ENCODE measurements at regions of chr2 and their contacts with region 1.

Region 1: GRCh38 chr2:192162392-192163042 is 32.2 kb downstream of the TMEFF2 start:
- DNase-seq: no peak
- ATAC-seq: peak; percentile 50
- H3K4me3 Mint-ChIP-seq: peak overlapping the region; percentile 17
- H3K27ac Mint-ChIP-seq: no peak overlapping the region
- H3K4me1 Mint-ChIP-seq: peaks cover 12% of the 10 kb centered on the region
- H3K27me3 Mint-ChIP-seq: peaks cover 4% of the 10 kb centered on the region
- CTCF ChIP-seq: peak; percentile 53

Region 2: DNA sequence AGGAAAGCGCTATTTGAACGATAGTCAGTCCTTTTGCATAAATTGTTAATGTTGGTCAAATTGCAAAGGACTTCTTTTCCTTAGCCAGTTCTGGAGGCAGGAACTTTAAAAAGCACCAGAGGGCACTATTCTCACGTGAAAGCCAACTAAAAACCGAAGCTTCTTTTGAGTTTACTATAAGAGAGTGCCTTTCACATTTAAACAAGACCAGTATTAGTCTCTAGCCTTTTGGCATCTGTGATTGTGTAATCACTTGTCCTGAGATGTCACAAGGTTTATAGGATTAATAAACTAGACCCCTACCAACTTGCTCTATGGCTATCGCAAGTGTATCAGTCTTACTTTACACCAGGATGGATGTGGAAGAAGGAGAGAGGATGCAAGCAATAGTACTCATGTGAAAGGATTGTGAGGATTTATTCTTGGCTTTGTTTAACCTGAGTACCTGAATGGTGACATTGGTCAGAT is 997.3 kb before region 1 on chr2:
- CTCF ChIA-PET with region 1: interaction called, 7 read pairs
- POLR2A ChIA-PET with region 1: no interaction called
- intact Hi-C with region 1: loop called (anchors 2 kb)
- DNase-seq: no peak
- ATAC-seq: no peak
- H3K4me3 Mint-ChIP-seq: no peak overlapping the region
- H3K27ac Mint-ChIP-seq: no peak overlapping the region
- H3K4me1 Mint-ChIP-seq: peaks cover 2% of the 10 kb centered on the region
- H3K27me3 Mint-ChIP-seq: peaks cover 10% of the 10 kb centered on the region
- CTCF ChIP-seq: no peak

Region 3: GRCh38 chr2:191555092-191555742 is 607.3 kb before region 1 on chr2:
- CTCF ChIA-PET with region 1: interaction called, 171 read pairs
- POLR2A ChIA-PET with region 1: no interaction called
- intact Hi-C with region 1: loop called (anchors 1 kb)
- DNase-seq: peak; percentile 63
- ATAC-seq: peak; percentile 94
- H3K4me3 Mint-ChIP-seq: no peak overlapping the region
- H3K27ac Mint-ChIP-seq: no peak overlapping the region
- H3K4me1 Mint-ChIP-seq: peaks cover 3% of the 10 kb centered on the region
- H3K27me3 Mint-ChIP-seq: peaks cover 5% of the 10 kb centered on the region
- CTCF ChIP-seq: peak; percentile 43

Region 4: DNA sequence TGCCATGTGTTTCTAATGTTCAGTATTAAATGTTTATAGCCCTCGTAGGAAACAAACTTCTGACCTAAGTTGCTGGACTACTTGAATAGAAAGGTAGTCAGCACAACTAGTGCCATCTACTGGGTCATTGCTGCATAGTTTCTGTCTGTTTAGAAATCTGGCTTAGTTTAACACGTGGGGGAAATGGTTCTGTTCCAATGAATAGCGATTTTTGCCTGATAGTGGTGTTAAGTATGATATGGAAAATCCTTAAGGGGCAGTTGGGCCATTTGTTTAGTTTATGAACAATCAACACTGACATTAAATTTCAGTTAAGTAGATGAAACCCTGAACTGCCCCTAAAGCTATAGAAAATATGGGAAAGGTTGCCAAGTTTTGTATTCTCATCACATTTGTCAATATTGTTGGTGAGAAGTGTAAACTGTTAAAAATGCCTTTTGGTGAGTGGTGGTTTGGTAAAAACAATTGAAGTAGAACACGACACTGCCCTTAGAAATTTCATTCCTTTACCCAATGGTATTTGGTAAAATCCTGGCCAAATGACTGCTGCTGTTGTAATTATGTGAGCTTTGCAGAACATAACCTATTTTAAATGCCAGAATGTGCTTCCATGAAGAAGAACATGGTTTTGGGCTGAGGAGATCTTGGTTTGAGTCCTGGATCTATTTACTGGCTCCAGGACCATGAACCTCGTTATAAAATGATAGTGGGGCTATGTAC is 471.3 kb before region 1 on chr2:
- CTCF ChIA-PET with region 1: interaction called, 8 read pairs
- POLR2A ChIA-PET with region 1: interaction called, 3 read pairs
- intact Hi-C with region 1: loop called (anchors 1 kb)
- DNase-seq: no peak
- ATAC-seq: peak; percentile 85
- H3K4me3 Mint-ChIP-seq: no peak overlapping the region
- H3K27ac Mint-ChIP-seq: peak overlapping the region; percentile 41
- H3K4me1 Mint-ChIP-seq: peaks cover 34% of the 10 kb centered on the region
- H3K27me3 Mint-ChIP-seq: no peaks in the 10 kb centered on the region
- CTCF ChIP-seq: no peak

Region 5: GRCh38 chr2:191811807-191812602 is 350.5 kb before region 1 on chr2:
- CTCF ChIA-PET with region 1: interaction called, 40 read pairs
- POLR2A ChIA-PET with region 1: no interaction called
- intact Hi-C with region 1: loop called (anchors 1 kb)
- DNase-seq: no peak
- ATAC-seq: no peak
- H3K4me3 Mint-ChIP-seq: no peak overlapping the region
- H3K27ac Mint-ChIP-seq: no peak overlapping the region
- H3K4me1 Mint-ChIP-seq: no peaks in the 10 kb centered on the region
- H3K27me3 Mint-ChIP-seq: peaks cover 2% of the 10 kb centered on the region
- CTCF ChIP-seq: no peak

Measured in activated B cell treated with CpG ODN at 0.5 μM for 24 hours (primary cell).